ENCODE measurements at regions of chr1 and their contacts with region 1.

Region 1: DNA sequence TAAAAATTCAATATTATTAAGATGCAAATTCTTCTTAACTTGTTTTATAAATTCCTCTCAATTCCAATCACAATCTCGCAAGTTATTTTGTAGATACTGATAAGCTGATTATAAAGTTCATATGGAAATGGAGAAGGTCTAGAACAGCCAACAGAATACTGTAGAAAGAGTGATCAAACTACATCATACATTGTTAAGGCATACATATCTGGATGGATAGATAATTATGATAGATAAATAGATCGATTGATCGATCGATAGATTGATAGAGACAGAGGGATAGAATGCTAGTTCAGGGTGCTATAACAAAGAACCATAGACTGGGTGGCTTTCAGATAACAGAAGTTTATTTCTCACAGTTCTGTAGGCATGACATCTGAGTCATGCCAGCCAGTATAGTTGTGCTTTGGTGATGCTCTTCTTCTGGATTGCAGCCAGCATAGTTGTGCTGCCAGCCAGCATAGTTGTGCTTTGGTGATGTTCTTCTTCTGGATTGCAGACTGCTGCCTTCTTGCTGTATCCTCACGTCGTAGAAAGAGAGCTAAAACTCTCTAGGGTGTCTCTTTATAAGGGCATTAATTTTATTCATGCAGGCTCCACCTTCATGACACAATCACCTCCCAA is 860.9 kb downstream of the BRINP3 start:
- DNase-seq: no peak
- H3K4me3 Mint-ChIP-seq: no peak overlapping the region
- H3K27ac Mint-ChIP-seq: no peak overlapping the region
- H3K4me1 Mint-ChIP-seq: no peaks in the 10 kb centered on the region
- H3K27me3 Mint-ChIP-seq: no peaks in the 10 kb centered on the region

Region 2: DNA sequence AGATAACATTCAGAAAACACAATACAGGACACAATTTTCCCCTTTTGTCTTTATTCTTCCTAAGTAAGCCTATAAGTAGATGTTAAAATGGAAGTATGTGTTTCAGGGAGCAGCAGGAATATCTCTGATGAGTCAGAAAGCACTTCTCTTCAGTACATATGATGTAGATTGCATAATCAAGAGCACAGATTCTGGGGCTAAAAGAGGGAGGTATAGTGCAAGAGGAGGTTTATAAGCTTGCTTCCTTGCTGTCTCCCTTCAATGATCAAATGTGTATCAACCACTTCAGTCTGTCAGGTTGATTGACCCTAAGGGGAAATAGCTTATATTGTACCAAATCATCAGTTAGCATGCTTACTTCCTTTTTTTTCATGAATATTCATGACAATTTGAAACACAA is 38.1 kb after region 1 on chr1:
- intact Hi-C with region 1: loop called (anchors 1 kb)
- DNase-seq: no peak
- H3K4me3 Mint-ChIP-seq: no peak overlapping the region
- H3K27ac Mint-ChIP-seq: no peak overlapping the region
- H3K4me1 Mint-ChIP-seq: no peaks in the 10 kb centered on the region
- H3K27me3 Mint-ChIP-seq: no peaks in the 10 kb centered on the region

Region 3: GRCh38 chr1:189752461-189752860 is 135.7 kb after region 1 on chr1:
- intact Hi-C with region 1: no loop called
- DNase-seq: no peak
- H3K4me3 Mint-ChIP-seq: no peak overlapping the region
- H3K27ac Mint-ChIP-seq: no peak overlapping the region
- H3K4me1 Mint-ChIP-seq: no peaks in the 10 kb centered on the region
- H3K27me3 Mint-ChIP-seq: no peaks in the 10 kb centered on the region